ENCODE measurements at regions of chr12 and their contacts with region 1.

Region 1: GRCh38 chr12:98644711-98645402 is at the starts of genes APAF1 and IKBIP:
- DNase-seq: peak; percentile 96 to 99
- H3K4me3 ChIP-seq: peak within 1 kb of the TSS; percentile 76
- CTCF ChIP-seq: no peak
- POLR2A ChIP-seq: no peak
- total RNA-seq, gene APAF1: 5.7 to 8.5 (median 6.5) TPM
- total RNA-seq, gene IKBIP: 0.42 to 5.3 (median 3.2) TPM

Region 2: DNA sequence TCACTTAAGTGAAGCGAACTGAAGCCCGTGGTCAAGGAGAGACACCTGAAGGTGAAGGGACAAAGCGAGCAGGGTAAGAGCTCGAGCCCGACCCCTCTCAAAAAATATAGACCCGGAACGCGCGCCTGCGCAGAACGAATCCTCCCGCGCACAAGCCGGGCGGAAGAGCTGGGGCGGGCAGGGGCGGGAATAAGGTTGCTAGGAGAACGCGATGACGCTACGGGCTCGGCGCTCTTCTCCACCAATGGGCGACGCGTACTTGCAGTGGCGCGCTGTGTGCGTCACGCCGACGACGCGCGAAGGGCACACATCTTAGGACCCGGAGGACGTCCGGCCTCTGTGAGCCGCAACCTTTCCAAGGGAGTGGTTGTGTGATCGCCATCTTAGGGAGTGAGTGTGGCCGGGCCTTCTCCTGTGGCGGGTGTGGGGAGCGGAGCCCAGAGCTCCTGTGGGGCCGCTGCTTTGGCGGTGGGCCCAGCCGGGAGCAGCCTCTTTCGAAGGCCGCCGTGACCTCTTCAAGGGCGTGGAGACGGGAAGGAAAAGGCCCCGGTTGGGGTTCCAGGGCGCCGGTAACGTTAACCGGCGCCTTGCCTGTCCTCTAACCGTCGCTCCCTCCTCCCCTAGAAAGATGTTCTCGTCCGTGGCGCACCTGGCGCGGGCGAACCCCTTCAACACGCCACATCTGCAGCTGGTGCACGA is 51.4 kb before region 1 on chr12 and contains the start of gene SLC25A3:
- intact Hi-C with region 1: loop called (anchors 2 kb)
- DNase-seq: peak; percentile 96 to 99
- H3K4me3 ChIP-seq: peak within 1 kb of the TSS; percentile 99
- CTCF ChIP-seq: no peak
- POLR2A ChIP-seq: peak in 1 of 2 donors; percentile 77
- total RNA-seq, gene SLC25A3: 371 to 467 (median 424) TPM

Region 3: GRCh38 chr12:98669751-98670150 is 24.9 kb after region 1 on chr12:
- intact Hi-C with region 1: no loop called
- DNase-seq: no peak
- H3K4me3 ChIP-seq: no peak overlapping the region
- CTCF ChIP-seq: no peak
- POLR2A ChIP-seq: no peak